Heart right ventricle (tissue), 16 donors: ENCODE measurements at regions of chr9 and their contacts with region 1.

Region 1: DNA sequence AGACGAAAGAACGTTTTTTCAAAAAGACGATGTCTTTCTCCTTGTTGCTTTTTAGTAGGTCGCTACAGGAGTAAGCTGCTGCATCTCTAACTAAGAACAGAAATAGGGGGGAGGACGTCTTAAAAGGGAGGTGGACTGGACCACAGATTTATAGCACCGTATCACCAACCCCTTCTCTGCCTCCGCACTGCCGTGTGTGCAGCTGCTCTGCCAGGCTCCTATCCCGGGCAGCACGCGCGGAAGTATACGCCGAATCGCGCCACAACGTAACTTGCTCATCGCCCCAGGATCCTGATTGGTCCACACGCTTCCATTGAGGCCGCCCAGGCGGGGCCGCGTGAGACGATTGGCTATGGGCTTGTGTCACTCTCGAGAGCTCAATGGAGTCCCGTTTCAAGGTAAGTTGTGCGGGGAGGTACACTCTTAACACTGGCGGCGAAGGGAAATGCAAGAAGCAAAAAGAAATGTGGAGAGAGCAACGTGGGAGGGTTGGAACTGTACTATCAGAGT is at the start of gene ELAVL2:
- DNase-seq: peak; percentile 75 to 80
- ATAC-seq: peak; percentile 87 to 96 (median 93)
- H3K4me3 ChIP-seq: peak within 1 kb of the TSS in 9 of 10 donors; percentile 23 to 51 (median 41)
- H3K27ac ChIP-seq: no peak within 1 kb of the TSS
- H3K4me1 ChIP-seq: peaks cover 0 to 30% (median 15%) of the 10 kb centered on the region in 9 donors
- H3K27me3 ChIP-seq: peaks cover 21 to 100% (median 99%) of the 10 kb centered on the region in 7 donors
- CTCF ChIP-seq: no peak
- total RNA-seq, gene ELAVL2: 0.09 to 0.64 (median 0.12) TPM in 6 of 10 donors, not detected in the others

Region 2: GRCh38 chr9:23526806-23527205 is 299.4 kb before region 1 on chr9:
- intact Hi-C with region 1: loop called in 1 of 10 experiments (anchors 10 kb)
- DNase-seq: no peak
- ATAC-seq: no peak
- H3K4me3 ChIP-seq: no peak overlapping the region
- H3K27ac ChIP-seq: no peak overlapping the region
- H3K4me1 ChIP-seq: peaks cover 0 to 19% (median 0%) of the 10 kb centered on the region in 9 donors
- H3K27me3 ChIP-seq: no peaks in the 10 kb centered on the region
- CTCF ChIP-seq: no peak

Region 3: GRCh38 chr9:23563517-23563916 is 262.7 kb before region 1 on chr9:
- intact Hi-C with region 1: no loop called
- DNase-seq: no peak
- ATAC-seq: no peak
- H3K4me3 ChIP-seq: no peak overlapping the region
- H3K27ac ChIP-seq: no peak overlapping the region
- H3K4me1 ChIP-seq: no peaks in the 10 kb centered on the region
- H3K27me3 ChIP-seq: no peaks in the 10 kb centered on the region
- CTCF ChIP-seq: no peak

Region 4: DNA sequence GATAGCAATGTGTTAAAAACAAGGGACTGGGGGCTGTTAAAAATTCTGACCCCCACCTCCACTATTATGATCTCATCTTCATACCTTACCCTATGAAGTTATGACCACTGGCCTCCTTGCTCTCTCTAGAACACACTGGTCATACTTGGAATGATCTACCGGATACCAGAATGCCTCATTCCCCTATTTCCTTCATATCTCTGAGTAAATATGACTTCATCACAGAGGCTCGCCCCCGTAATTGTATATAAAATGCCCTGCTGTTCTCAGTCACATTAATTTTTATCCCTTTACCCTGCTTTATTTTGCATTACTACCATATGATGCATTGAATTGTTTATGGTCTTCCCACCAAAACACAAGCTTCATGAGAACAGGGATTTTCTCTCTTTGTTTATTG is 690.3 kb after region 1 on chr9:
- intact Hi-C with region 1: no loop called
- DNase-seq: no peak
- ATAC-seq: no peak
- H3K4me3 ChIP-seq: no peak overlapping the region
- H3K27ac ChIP-seq: no peak overlapping the region
- H3K4me1 ChIP-seq: no peaks in the 10 kb centered on the region
- H3K27me3 ChIP-seq: no peaks in the 10 kb centered on the region
- CTCF ChIP-seq: no peak